Gastrocnemius medialis (tissue), 4 donors: ENCODE measurements at regions of chr4 and their contacts with region 1.

Region 1: GRCh38 chr4:70993181-70994068 is at the start of gene DCK:
- DNase-seq: peak; percentile 72 to 83
- ATAC-seq: peak; percentile 95 to 96
- H3K4me3 ChIP-seq: peak within 1 kb of the TSS; percentile 83 to 90 (median 87)
- H3K27ac ChIP-seq: peak within 1 kb of the TSS; percentile 82 to 90 (median 88)
- H3K4me1 ChIP-seq: peaks cover 13 to 16% of the 10 kb centered on the region in 2 donors
- H3K27me3 ChIP-seq: no peaks in the 10 kb centered on the region
- CTCF ChIP-seq: no peak
- POLR2A ChIP-seq: peak; percentile 53 to 60
- total RNA-seq, gene DCK: 6.3 to 17.2 (median 11.8) TPM

Region 2: DNA sequence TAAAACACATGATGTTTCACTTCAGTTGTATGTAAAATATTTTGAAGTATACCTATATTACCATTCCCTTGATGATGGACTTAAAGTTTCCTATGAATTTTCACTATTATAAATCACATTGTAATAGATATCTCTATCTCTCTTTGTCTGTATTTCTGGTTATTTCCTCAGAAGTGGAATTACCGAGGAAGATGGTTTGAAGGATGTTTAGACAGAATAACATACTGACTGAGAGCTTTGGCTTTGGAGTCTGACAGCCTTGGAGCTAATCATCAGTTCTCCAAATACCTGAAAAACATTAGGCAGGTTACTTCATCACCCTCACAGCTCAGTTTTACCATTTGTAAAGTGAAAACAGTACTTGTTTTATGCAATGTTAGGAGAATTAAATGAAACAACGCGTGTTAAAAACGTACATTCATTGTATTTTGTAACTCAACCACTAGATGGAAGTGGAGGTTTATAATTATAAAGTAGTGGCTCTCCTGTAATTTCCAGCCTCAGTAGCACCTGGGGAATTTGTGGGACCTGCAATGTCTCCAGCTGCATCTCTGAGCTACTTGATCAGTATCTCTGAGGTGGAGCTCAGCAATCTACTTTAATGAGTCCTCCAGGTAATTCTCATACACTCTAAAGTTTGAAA is 341.4 kb before region 1 on chr4:
- in situ Hi-C with region 1: loop called in 1 of 4 experiments (anchors 25 kb)
- intact Hi-C with region 1: no loop called
- DNase-seq: no peak
- ATAC-seq: peak in 1 of 2 donors; percentile 51
- H3K4me3 ChIP-seq: no peak overlapping the region
- H3K27ac ChIP-seq: no peak overlapping the region
- H3K4me1 ChIP-seq: peaks cover 0 to 4% of the 10 kb centered on the region in 2 donors
- H3K27me3 ChIP-seq: no peaks in the 10 kb centered on the region
- CTCF ChIP-seq: peak; percentile 36 to 57 (median 43)
- POLR2A ChIP-seq: no peak

Region 3: DNA sequence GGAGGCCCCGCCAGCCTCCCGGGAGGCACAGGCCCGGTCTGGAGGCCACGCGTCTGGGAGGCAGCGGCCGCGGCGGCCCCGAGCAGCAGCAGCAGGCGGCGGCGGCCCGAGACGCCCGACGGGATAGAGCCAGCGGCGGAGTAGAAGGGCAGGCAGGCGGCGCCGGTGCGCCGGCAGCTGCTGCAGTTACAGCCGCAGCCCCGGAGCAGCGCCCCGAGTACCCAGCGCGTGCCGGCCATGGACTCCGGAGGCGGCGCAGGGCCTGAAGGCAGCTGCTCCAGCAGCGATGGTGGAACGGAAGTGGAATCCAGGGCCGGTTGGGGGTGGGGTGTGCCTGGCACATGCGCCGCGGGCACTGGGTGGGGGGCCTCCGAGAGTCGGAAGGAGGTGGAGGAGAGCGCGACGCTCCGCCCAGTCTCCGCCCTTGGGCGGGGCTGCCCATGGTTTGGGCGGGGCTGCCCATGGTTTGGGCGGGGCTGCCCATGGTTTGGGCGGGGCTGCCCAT is 153.8 kb before region 1 on chr4 and contains the start of gene GRSF1:
- in situ Hi-C with region 1: no loop called
- intact Hi-C with region 1: loop called (anchors 2 kb)
- DNase-seq: peak; percentile 94
- ATAC-seq: peak; percentile 89 to 91
- H3K4me3 ChIP-seq: peak within 1 kb of the TSS; percentile 68 to 96 (median 78)
- H3K27ac ChIP-seq: peak within 1 kb of the TSS; percentile 86 to 98 (median 92)
- H3K4me1 ChIP-seq: peaks cover 23 to 29% of the 10 kb centered on the region in 2 donors
- H3K27me3 ChIP-seq: no peaks in the 10 kb centered on the region
- CTCF ChIP-seq: peak in 2 of 5 experiments; percentile 8 to 11
- POLR2A ChIP-seq: peak; percentile 71 to 84
- total RNA-seq, gene GRSF1: 121 to 158 (median 140) TPM

Region 4: DNA sequence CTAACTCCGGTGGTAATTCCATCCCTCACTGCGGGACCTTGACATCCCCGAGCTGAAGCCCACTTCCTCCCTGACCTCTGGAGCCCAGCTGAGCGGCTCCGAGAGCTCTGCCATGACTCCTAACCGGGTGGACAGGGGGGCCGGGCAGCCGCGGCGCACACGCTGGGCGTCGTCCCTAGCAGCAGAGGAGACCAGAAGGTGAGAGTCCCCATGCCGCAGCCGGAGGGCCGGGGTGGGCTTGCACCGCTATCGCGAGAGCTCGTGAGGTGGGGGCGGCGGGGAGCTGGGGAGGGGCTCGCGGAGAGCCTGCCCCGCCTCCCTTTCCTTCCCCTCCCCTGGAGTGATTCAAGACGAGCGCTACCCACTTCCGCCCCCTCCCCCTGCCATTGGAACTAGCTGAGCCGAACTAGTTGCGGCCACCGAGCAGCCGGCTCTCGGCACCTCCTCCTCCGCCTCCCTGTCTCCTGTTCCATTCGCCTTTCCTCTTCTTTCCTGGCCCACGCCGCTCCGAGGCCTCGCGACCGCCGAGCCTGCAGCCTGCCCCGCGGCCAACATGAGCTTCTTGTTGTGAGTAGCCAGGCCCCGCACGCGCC is 91.3 kb before region 1 on chr4 and contains the start of gene MOB1B:
- in situ Hi-C with region 1: no loop called
- intact Hi-C with region 1: loop called (anchors 2 kb)
- DNase-seq: peak; percentile 74 to 77
- ATAC-seq: peak; percentile 96
- H3K4me3 ChIP-seq: peak within 1 kb of the TSS; percentile 73 to 96 (median 91)
- H3K27ac ChIP-seq: peak within 1 kb of the TSS; percentile 79 to 90 (median 87)
- H3K4me1 ChIP-seq: peaks cover 5 to 10% of the 10 kb centered on the region in 2 donors
- H3K27me3 ChIP-seq: no peaks in the 10 kb centered on the region
- CTCF ChIP-seq: peak in 4 of 5 experiments; percentile 15 to 58 (median 34)
- POLR2A ChIP-seq: peak; percentile 26 to 47
- total RNA-seq, gene MOB1B: 6.5 to 17.5 (median 8.4) TPM

Region 5: GRCh38 chr4:71009890-71010588 is 16.6 kb after region 1 on chr4:
- in situ Hi-C with region 1: no loop called
- intact Hi-C with region 1: loop called (anchors 2 kb)
- DNase-seq: no peak
- ATAC-seq: no peak
- H3K4me3 ChIP-seq: no peak overlapping the region
- H3K27ac ChIP-seq: no peak overlapping the region
- H3K4me1 ChIP-seq: no peaks in the 10 kb centered on the region
- H3K27me3 ChIP-seq: no peaks in the 10 kb centered on the region
- CTCF ChIP-seq: peak; percentile 22 to 68 (median 46)
- POLR2A ChIP-seq: no peak

Region 6: DNA sequence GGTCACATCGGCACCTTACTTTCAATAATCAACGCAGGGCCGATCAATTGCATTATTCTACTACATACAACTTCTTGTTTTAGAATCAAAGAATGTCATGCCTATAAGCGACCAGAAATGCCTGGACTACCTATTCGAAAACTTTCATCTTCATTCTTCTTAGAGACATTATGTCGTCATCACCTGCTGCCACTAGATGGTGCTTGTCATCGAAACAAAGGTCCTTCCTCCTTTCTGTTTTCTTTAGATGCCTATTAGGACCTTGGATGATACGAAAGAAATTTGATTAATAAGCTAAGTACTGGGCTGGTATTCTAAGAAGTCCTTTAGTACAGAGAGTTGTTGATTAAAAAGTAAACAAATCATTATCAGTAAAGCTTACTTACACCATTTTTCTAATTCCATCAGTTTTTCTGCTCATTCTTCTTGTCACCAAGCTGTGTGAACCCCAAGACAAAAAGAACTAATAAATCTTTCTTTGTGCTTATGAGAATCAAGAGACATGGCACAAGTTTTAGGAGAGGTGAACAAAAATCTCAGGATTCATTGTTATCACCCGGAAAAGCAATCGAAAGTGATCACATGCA is 190.9 kb after region 1 on chr4:
- in situ Hi-C with region 1: no loop called
- intact Hi-C with region 1: loop called (anchors 10 kb)
- DNase-seq: peak in 1 of 2 donors; percentile 17
- ATAC-seq: peak; percentile 21 to 40
- H3K4me3 ChIP-seq: no peak overlapping the region
- H3K27ac ChIP-seq: no peak overlapping the region
- H3K4me1 ChIP-seq: peaks cover 8 to 10% of the 10 kb centered on the region in 2 donors
- H3K27me3 ChIP-seq: no peaks in the 10 kb centered on the region
- CTCF ChIP-seq: peak; percentile 22 to 65 (median 23)
- POLR2A ChIP-seq: no peak